ENCODE measurements at regions of chr11 and their contacts with region 1.

Region 1: GRCh38 chr11:122383186-122383585 is 267.2 kb upstream of the BLID start:
- DNase-seq: no peak
- ATAC-seq: no peak
- H3K4me3 ChIP-seq: no peak overlapping the region
- H3K4me3 Mint-ChIP-seq: no peak overlapping the region
- H3K27ac ChIP-seq: no peak overlapping the region
- H3K27ac Mint-ChIP-seq: no peak overlapping the region
- H3K4me1 ChIP-seq: no peaks in the 10 kb centered on the region
- H3K4me1 Mint-ChIP-seq: no peaks in the 10 kb centered on the region
- H3K27me3 ChIP-seq: no peaks in the 10 kb centered on the region
- H3K27me3 Mint-ChIP-seq: no peaks in the 10 kb centered on the region

Region 2: GRCh38 chr11:122888162-122888561 is 505.0 kb after region 1 on chr11:
- CTCF ChIA-PET with region 1: no interaction called
- POLR2A ChIA-PET with region 1: interaction called in 1 of 2 experiments, 12 read pairs
- DNase-seq: no peak
- ATAC-seq: no peak
- H3K4me3 ChIP-seq: no peak overlapping the region
- H3K4me3 Mint-ChIP-seq: no peak overlapping the region
- H3K27ac ChIP-seq: no peak overlapping the region
- H3K27ac Mint-ChIP-seq: no peak overlapping the region
- H3K4me1 ChIP-seq: peaks cover 0 to 8% of the 10 kb centered on the region in 2 experiments
- H3K4me1 Mint-ChIP-seq: peaks cover 23 to 27% (median 27%) of the 10 kb centered on the region in 3 donors
- H3K27me3 ChIP-seq: no peaks in the 10 kb centered on the region
- H3K27me3 Mint-ChIP-seq: no peaks in the 10 kb centered on the region

Region 3: DNA sequence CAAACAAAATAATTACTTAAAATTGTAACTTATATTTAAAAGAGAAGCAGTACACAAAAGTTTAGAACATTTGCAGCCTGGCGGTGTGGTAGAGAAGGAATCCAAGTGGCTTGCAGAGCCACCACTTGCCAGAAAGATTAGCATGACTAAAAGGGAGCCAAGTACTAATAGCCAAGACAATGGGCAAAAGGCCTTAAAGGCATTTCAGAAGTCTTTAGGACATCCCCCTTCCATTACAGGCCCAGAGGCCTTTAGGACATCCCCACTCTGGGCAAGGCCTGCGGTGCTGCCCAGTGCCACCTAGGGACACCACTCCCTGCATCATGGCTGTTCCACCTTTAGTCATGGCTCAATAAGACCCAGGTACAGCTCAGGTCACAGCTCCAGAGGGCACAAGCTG is 1469.9 kb after region 1 on chr11:
- CTCF ChIA-PET with region 1: no interaction called
- POLR2A ChIA-PET with region 1: no interaction called
- DNase-seq: no peak
- ATAC-seq: no peak
- H3K4me3 ChIP-seq: no peak overlapping the region
- H3K4me3 Mint-ChIP-seq: no peak overlapping the region
- H3K27ac ChIP-seq: no peak overlapping the region
- H3K27ac Mint-ChIP-seq: no peak overlapping the region
- H3K4me1 ChIP-seq: no peaks in the 10 kb centered on the region
- H3K4me1 Mint-ChIP-seq: peaks cover 0 to 6% (median 0%) of the 10 kb centered on the region in 3 donors
- H3K27me3 ChIP-seq: peaks cover 0 to 18% of the 10 kb centered on the region in 2 experiments
- H3K27me3 Mint-ChIP-seq: peaks cover 18 to 30% of the 10 kb centered on the region in 2 donors

Measured in T-cell (primary cell).